ENCODE measurements at regions of chr11 and their contacts with region 1.

Region 1: GRCh38 chr11:81787584-81788049 is 946.0 kb downstream of the FAM181B start:
- DNase-seq: peak; percentile 9
- H3K4me3 Mint-ChIP-seq: no peak overlapping the region
- H3K27ac Mint-ChIP-seq: peak overlapping the region; percentile 61
- H3K4me1 Mint-ChIP-seq: peaks cover 14% of the 10 kb centered on the region
- H3K27me3 Mint-ChIP-seq: no peaks in the 10 kb centered on the region

Region 2: GRCh38 chr11:81644239-81644840 is 143.3 kb before region 1 on chr11:
- CTCF ChIA-PET with region 1: no interaction called
- intact Hi-C with region 1: loop called (anchors 10 kb)
- DNase-seq: peak; percentile 19
- H3K4me3 Mint-ChIP-seq: no peak overlapping the region
- H3K27ac Mint-ChIP-seq: no peak overlapping the region
- H3K4me1 Mint-ChIP-seq: no peaks in the 10 kb centered on the region
- H3K27me3 Mint-ChIP-seq: peaks cover 36% of the 10 kb centered on the region

Region 3: DNA sequence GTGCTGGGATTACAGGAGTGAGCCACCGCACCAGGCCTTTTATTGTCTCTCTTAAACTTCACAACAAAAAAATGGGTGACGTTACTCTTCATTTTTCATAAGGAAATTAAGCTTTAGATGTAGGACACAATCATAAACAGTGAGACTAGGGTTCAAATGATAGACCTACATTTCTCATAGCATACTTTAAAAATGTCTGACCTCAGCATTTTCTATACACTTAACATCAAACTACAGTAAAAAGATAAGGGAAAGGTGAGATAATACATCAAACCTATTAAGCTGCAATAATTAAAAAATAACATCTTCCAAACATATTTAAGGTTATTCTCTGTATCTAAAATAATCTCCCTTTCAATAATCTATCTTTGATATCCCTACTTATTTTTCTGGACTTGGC is 31.8 kb after region 1 on chr11:
- CTCF ChIA-PET with region 1: no interaction called
- intact Hi-C with region 1: loop called (anchors 1 kb)
- DNase-seq: no peak
- H3K4me3 Mint-ChIP-seq: no peak overlapping the region
- H3K27ac Mint-ChIP-seq: no peak overlapping the region
- H3K4me1 Mint-ChIP-seq: peaks cover 8% of the 10 kb centered on the region
- H3K27me3 Mint-ChIP-seq: no peaks in the 10 kb centered on the region

Region 4: DNA sequence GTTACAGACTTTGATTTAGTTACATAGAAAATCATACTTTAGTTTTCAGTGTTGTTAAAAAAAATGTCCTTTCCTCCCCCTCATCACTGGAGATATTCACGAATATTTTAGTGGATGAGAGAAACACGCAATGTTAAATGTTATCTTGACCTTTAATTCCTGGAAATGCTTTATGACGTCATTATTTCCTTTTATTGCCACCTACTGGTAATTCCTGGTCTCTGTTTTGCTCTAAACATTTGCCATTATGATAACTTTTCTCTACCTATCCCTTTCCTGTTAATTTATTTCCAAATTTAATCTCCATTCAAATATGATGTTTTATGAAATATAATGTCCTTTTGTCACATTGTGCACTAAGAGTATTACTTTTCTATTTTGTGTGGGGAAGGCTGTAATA is 175.4 kb after region 1 on chr11:
- CTCF ChIA-PET with region 1: interaction called, 3 read pairs
- intact Hi-C with region 1: loop called (anchors 1 kb)
- DNase-seq: no peak
- H3K4me3 Mint-ChIP-seq: no peak overlapping the region
- H3K27ac Mint-ChIP-seq: no peak overlapping the region
- H3K4me1 Mint-ChIP-seq: peaks cover 20% of the 10 kb centered on the region
- H3K27me3 Mint-ChIP-seq: no peaks in the 10 kb centered on the region

Region 5: GRCh38 chr11:82038153-82038552 is 250.5 kb after region 1 on chr11:
- CTCF ChIA-PET with region 1: no interaction called
- intact Hi-C with region 1: loop called (anchors 1 kb)
- DNase-seq: no peak
- H3K4me3 Mint-ChIP-seq: no peak overlapping the region
- H3K27ac Mint-ChIP-seq: no peak overlapping the region
- H3K4me1 Mint-ChIP-seq: no peaks in the 10 kb centered on the region
- H3K27me3 Mint-ChIP-seq: no peaks in the 10 kb centered on the region

Region 6: DNA sequence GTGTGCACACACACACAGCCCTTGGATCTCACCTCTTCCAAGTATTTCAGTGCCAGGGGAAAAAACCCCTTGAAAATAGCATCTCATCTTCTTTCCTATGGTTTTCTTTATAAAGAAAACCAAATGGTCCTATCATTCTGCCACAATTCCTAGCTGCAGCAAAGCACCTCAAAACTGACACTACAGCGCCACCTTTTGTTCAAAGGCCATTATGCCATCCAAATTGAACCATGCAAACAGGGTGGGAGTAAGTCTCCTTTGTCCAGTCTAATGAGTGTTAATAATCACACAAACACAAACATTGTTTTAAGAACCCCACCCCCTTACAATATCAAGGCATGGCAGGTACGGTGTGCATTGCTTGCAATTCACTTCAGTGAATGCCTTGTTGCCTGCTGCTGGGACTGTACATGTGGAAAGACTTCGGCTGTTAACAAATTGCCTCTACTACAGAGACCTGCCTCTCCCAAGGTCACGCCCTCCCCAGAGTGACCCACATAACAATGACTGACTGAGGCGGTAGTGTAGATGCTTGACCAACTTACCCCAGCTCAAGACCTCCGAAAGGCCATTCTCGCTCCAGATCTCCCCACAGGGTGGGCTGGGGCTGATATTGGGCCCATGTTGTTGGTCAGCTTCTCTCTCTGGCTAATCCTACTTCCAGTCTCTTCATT is 914.4 kb after region 1 on chr11:
- CTCF ChIA-PET with region 1: no interaction called
- intact Hi-C with region 1: loop called (anchors 10 kb)
- DNase-seq: peak; percentile 58
- H3K4me3 Mint-ChIP-seq: no peak overlapping the region
- H3K27ac Mint-ChIP-seq: no peak overlapping the region
- H3K4me1 Mint-ChIP-seq: no peaks in the 10 kb centered on the region
- H3K27me3 Mint-ChIP-seq: peaks cover 5% of the 10 kb centered on the region

Measured in activated naive CD4-positive, alpha-beta T cell treated with anti-CD3 and anti-CD28 coated beads for 36 hours (primary cell).